Caco-2 (cell line): ENCODE measurements at regions of chr6 and their contacts with region 1.

Region 1: DNA sequence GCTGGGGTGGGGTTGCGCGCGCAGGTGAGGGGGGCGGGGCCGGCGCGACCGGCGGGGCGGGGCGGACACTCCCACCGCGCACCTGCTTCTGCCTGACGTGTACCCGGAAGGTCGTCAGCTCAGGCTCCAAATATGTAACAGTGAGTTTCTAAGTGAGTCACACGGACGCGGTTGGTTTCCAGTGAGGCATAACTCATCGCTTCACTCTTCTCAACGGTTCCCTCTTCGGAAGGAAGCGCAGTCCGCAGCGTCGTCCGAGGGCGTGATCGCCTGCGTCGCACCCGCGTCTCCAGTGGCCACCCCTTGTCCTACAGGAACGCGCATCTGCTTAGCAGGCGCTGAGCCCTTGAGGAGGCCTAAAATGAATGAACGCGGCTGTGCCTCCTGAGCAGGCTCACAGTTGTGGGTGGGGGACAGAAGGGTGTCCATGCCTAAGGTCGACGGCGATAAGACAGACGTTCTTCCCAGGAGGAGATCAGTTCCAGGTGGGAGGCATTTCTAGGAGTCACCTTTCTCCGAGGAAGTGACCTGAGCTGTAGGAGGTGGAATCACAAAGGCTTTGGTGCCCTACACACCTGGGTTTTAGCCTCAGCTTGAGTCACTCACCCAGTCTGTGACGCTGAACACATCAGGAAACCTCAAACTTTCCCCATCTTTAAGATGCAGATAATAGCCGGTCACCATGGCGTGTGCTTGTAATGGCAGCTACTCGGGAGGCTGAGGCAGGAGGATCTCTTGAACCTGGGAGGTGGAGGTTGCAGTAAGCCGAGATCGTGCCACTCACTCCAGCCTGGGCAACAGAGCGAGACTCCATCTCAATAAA is 50.9 kb upstream of the EZR start:
- DNase-seq: peak in 1 of 2 experiments; percentile 93
- H3K4me3 ChIP-seq: peak overlapping the region; percentile 61
- H3K4me3 Mint-ChIP-seq: peak overlapping the region; percentile 84
- H3K27ac Mint-ChIP-seq: peak overlapping the region; percentile 99
- H3K4me1 ChIP-seq: peaks cover 19% of the 10 kb centered on the region
- H3K4me1 Mint-ChIP-seq: peaks cover 31% of the 10 kb centered on the region
- H3K27me3 ChIP-seq: no peaks in the 10 kb centered on the region
- H3K27me3 Mint-ChIP-seq: no peaks in the 10 kb centered on the region
- CTCF ChIP-seq: peak in 1 of 2 experiments; percentile 21

Region 2: DNA sequence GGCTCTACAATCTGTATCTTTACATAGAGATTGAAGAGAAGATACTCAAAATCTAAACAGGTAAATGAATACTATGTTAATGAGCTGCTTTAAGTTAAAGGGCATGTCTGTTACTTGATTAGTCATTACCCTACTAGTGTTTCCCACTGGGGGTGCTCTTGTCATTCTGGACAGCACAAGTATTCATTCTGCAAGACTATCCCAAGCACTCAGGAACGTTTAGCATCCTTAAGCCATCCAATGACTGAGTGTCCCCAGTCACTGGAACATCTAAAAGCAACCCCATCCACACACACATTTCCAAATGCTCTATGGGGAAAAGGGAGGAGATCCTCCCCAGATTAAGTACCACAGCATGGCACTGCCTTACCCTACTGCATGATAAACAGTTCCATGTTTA is 76.6 kb before region 1 on chr6:
- CTCF ChIA-PET with region 1: no interaction called
- POLR2A ChIA-PET with region 1: no interaction called
- intact Hi-C with region 1: no loop called
- DNase-seq: peak in 1 of 2 experiments; percentile 64
- H3K4me3 ChIP-seq: no peak overlapping the region
- H3K4me3 Mint-ChIP-seq: no peak overlapping the region
- H3K27ac Mint-ChIP-seq: no peak overlapping the region
- H3K4me1 ChIP-seq: peaks cover 29% of the 10 kb centered on the region
- H3K4me1 Mint-ChIP-seq: no peaks in the 10 kb centered on the region
- H3K27me3 ChIP-seq: no peaks in the 10 kb centered on the region
- H3K27me3 Mint-ChIP-seq: no peaks in the 10 kb centered on the region
- CTCF ChIP-seq: peak; percentile 45 to 50

Region 3: GRCh38 chr6:158853072-158853871 is 16.8 kb before region 1 on chr6:
- CTCF ChIA-PET with region 1: interaction called, 9 read pairs
- POLR2A ChIA-PET with region 1: interaction called, 55 read pairs
- intact Hi-C with region 1: loop called (anchors 1 kb)
- DNase-seq: peak; percentile 95 to 98
- H3K4me3 ChIP-seq: peak overlapping the region; percentile 21
- H3K4me3 Mint-ChIP-seq: no peak overlapping the region
- H3K27ac Mint-ChIP-seq: no peak overlapping the region
- H3K4me1 ChIP-seq: peaks cover 64% of the 10 kb centered on the region
- H3K4me1 Mint-ChIP-seq: peaks cover 27% of the 10 kb centered on the region
- H3K27me3 ChIP-seq: no peaks in the 10 kb centered on the region
- H3K27me3 Mint-ChIP-seq: no peaks in the 10 kb centered on the region
- CTCF ChIP-seq: no peak

Region 4: GRCh38 chr6:158910484-158911348 is 40.7 kb after region 1 on chr6:
- CTCF ChIA-PET with region 1: no interaction called
- POLR2A ChIA-PET with region 1: interaction called, 4 read pairs
- intact Hi-C with region 1: loop called (anchors 1 kb)
- DNase-seq: peak; percentile 69 to 71
- H3K4me3 ChIP-seq: 0 out of 2 replicates have a peak overlapping the region, but pooled peaks have one; percentile 8
- H3K4me3 Mint-ChIP-seq: peak overlapping the region; percentile 66
- H3K27ac Mint-ChIP-seq: peak overlapping the region; percentile 89
- H3K4me1 ChIP-seq: peaks cover 23% of the 10 kb centered on the region
- H3K4me1 Mint-ChIP-seq: peaks cover 10% of the 10 kb centered on the region
- H3K27me3 ChIP-seq: no peaks in the 10 kb centered on the region
- H3K27me3 Mint-ChIP-seq: no peaks in the 10 kb centered on the region
- CTCF ChIP-seq: no peak

Region 5: DNA sequence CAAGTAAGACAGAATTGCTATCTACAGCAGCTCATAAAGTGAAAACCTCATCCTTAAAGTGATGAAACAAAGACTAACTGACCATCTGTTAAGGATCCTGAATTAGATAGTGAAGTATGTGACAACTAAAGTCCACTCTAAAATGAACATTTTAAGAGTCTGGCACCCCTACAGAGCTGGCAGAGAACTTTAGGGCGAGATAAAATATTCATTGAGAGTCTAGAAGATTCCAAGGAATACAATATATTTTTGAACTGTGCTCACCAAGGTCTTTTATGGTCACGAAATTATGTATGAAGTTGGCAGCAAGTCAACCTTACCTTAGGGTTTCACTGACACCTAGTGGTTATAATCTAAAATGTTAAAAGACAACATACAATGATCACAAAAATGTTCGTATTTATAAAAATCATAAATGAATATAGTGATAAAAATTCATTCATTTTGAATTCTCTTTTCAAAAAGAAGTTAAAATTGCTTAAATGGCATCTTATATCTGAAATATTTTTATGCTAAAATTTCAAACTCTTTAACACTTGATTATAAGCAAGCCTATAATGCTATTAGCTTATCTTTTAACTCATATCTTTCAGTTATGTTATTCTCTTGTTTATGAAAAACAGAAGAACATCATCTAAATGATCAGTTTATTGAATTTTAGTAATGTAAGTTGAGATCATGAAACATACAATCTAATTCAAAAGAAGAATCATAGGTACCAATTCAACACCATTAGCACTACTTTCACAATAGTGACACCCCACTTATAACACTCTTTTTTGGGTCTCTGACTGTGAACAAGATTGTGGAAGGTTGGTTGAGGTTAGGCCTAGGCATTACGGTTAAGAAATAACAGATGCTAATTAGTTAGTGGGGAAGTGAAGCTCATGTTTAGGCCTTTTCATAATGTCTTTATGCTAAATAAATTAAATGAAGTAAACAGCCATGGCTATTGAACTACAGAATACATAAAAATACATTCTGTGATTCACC is 102.5 kb after region 1 on chr6:
- CTCF ChIA-PET with region 1: interaction called, 3 read pairs
- POLR2A ChIA-PET with region 1: interaction called, 3 read pairs
- intact Hi-C with region 1: loop called (anchors 2 kb)
- DNase-seq: peak in 1 of 2 experiments; percentile 12
- H3K4me3 ChIP-seq: no peak overlapping the region
- H3K4me3 Mint-ChIP-seq: no peak overlapping the region
- H3K27ac Mint-ChIP-seq: no peak overlapping the region
- H3K4me1 ChIP-seq: no peaks in the 10 kb centered on the region
- H3K4me1 Mint-ChIP-seq: no peaks in the 10 kb centered on the region
- H3K27me3 ChIP-seq: no peaks in the 10 kb centered on the region
- H3K27me3 Mint-ChIP-seq: no peaks in the 10 kb centered on the region
- CTCF ChIP-seq: peak; percentile 30 to 67

Region 6: DNA sequence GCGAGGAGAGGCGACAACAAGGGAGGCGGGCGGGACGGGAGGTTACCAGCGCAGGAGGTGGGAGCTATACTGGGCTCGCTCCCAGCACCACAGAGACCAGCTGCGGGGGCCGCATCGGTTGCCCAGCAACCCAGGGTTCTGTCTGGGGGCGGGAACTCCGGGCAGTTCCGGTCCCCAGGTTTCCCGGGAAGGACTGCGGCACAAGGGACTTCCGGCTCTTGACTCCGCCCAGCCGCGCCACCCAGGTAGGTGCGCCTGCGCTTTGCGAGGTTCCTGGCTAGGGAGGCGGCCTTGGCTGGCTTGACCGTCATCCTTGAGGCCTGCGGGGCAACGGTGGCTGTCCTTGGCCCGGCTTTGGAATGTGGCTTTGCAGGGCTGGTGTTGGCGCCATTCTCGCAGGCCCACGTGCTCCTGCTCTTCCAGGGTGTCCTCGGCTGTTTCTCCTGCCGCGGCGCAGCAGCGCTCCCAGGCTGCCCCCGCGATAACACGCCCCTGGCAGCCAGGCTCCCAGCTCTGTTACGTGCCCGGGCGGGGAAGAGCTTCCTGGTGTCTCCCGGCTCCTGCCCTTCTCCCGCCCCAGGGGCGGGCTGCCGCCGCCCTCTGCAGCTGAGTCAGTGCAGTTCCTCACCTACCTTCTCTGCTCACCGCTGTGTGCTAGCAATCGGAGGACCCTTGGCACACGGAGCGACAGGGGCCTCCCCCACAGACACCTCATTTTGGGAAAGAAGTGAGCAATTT is 129.8 kb after region 1 on chr6 and contains the start of gene RSPH3:
- CTCF ChIA-PET with region 1: no interaction called
- POLR2A ChIA-PET with region 1: interaction called, 10 read pairs
- intact Hi-C with region 1: no loop called
- DNase-seq: peak; percentile 97
- H3K4me3 ChIP-seq: peak within 1 kb of the TSS; percentile 85
- H3K4me3 Mint-ChIP-seq: peak within 1 kb of the TSS; percentile 99
- H3K27ac Mint-ChIP-seq: peak within 1 kb of the TSS; percentile 95
- H3K4me1 ChIP-seq: peaks cover 5% of the 10 kb centered on the region; the same call in 1 of the 2 replicates
- H3K4me1 Mint-ChIP-seq: peaks cover 11% of the 10 kb centered on the region
- H3K27me3 ChIP-seq: no peaks in the 10 kb centered on the region
- H3K27me3 Mint-ChIP-seq: no peaks in the 10 kb centered on the region
- CTCF ChIP-seq: peak in 1 of 2 experiments; percentile 31
- total RNA-seq, gene RSPH3: 3.0 and 3.4 TPM in 2 replicates